AG04449 (cell line): ENCODE measurements at regions of chr1 and their contacts with region 1.

Region 1: GRCh38 chr1:222455188-222455879 is 92.6 kb downstream of the HHIPL2 start:
- DNase-seq: peak; percentile 78
- H3K4me3 ChIP-seq: peak overlapping the region; percentile 48
- CTCF ChIP-seq: peak; percentile 92

Region 2: DNA sequence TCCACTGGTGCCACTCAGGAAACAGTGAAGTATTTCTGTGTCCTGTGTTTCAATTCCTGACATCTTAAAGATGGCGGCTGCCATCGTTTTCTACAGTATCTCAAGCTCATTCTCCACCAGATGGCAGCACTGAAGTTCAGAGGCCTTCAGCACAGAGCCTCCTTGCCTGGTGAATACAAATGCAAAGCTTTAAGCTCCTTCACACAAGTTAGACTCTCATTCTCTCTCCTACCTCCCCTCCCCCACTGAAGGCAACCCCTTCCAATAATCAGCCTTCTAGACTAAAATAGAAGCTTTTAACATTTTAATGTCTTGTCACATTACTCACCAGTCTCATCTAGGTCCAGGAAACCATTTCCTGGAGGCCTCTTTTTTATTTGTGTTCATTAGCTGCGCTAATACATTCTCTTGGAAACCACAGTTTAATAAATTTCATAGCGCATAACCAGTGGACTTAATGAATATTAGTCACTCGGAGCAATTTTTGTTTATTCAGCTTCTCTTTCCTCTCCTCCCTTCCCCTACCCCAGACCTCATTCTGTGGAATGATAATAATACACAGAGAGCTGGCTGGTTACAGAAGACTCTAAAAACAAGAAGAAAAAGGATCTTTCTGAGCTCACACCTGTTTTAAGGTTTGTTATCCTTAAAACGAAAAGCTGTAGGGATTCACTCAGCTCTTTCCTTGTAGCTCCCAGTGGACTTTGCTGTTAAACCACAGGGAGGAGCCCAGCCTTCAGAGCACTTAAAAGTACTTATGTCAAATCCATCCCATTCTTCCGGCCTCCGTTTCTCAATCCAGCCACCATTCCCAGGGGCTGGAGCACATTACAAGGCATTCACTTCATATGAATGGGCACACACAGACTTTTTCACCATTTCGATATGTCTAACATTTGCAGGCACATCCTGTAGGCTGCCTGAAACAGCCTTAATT is 1191.2 kb before region 1 on chr1:
- CTCF ChIA-PET with region 1: interaction called, 21 read pairs
- POLR2A ChIA-PET with region 1: interaction called, 5 read pairs
- DNase-seq: peak; percentile 81
- H3K4me3 ChIP-seq: no peak overlapping the region
- CTCF ChIP-seq: peak; percentile 69

Region 3: GRCh38 chr1:221718381-221719277 is 736.7 kb before region 1 on chr1:
- CTCF ChIA-PET with region 1: interaction called, 18 read pairs
- POLR2A ChIA-PET with region 1: no interaction called
- DNase-seq: peak; percentile 98
- H3K4me3 ChIP-seq: no peak overlapping the region
- CTCF ChIP-seq: no peak

Region 4: DNA sequence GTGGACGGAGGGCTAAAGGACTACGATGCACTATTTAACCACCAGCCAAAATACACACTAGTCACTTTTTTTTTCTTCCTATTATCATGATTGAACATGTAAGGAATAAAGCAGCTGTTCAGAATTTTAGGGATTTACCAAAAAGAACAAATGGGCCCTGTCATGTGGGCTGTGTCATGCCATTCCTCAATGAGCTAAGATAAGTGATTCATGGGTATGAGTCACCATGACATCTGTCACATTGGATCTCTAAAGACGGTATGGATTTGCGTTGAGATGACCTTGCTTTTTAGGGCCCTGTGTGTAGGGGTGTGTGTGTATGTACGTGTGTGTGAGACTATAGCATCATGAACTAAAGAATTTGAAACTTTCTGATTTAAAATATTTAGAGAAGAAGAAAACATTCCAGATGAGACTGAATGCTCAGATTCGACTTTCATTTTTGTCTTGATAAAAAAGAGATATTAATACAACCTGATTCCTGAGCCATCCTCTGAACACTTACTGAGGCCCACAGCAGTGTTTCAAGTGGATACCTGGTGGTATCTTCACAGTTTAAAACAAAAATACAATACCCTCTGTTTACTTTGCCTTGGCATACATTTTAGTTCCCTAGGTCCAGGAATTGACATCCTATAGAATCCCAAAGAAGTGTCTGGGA is 467.3 kb before region 1 on chr1:
- CTCF ChIA-PET with region 1: interaction called, 14 read pairs
- POLR2A ChIA-PET with region 1: no interaction called
- DNase-seq: peak; percentile 57
- H3K4me3 ChIP-seq: no peak overlapping the region
- CTCF ChIP-seq: no peak

Region 5: DNA sequence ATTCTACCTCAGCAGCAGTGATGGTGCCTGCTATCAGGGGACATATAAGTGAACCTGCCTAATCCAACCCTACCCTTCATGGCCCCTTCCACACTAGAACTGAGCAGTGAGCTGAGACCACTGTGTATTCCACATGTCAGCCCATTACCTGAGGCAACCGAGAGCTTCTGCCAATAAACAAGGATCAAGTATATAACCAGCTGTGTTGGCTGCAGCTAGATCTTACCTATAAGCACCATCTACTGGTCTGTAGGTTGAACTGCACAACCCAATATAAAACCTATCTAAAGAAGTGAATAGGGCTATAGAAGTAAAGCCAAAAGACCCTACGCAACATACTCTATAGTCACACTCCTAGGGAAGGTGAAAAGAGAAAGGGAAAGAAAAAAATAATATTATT is 284.3 kb before region 1 on chr1:
- CTCF ChIA-PET with region 1: interaction called, 16 read pairs
- POLR2A ChIA-PET with region 1: interaction called, 3 read pairs
- DNase-seq: no peak
- H3K4me3 ChIP-seq: no peak overlapping the region
- CTCF ChIP-seq: peak; percentile 42

Region 6: GRCh38 chr1:222443566-222443965 is 11.8 kb before region 1 on chr1:
- CTCF ChIA-PET with region 1: interaction called, 21 read pairs
- POLR2A ChIA-PET with region 1: no interaction called
- DNase-seq: no peak
- H3K4me3 ChIP-seq: no peak overlapping the region
- CTCF ChIP-seq: no peak

Region 7: DNA sequence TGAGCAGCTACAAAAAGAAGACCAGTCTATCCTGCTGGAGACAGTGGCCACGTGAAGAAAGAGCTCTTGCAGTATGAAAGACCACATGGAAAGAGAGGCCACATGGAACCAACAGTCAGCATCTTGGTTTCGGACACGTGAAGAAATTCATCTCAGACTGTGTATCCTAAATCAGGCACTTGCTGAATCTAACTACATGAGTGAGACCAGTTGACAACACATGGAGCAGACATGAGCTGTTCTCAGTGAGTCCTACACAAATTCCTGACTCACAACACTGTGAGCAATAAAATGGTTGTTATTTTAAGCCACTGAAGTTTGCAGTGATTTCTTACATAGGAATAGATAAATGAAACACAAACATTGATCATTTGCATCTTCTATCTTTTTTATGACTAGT is 136.8 kb after region 1 on chr1:
- CTCF ChIA-PET with region 1: no interaction called
- POLR2A ChIA-PET with region 1: no interaction called
- DNase-seq: peak; percentile 12
- H3K4me3 ChIP-seq: no peak overlapping the region
- CTCF ChIP-seq: no peak